ENCODE measurements at regions of chr12 and their contacts with region 1.

Region 1: DNA sequence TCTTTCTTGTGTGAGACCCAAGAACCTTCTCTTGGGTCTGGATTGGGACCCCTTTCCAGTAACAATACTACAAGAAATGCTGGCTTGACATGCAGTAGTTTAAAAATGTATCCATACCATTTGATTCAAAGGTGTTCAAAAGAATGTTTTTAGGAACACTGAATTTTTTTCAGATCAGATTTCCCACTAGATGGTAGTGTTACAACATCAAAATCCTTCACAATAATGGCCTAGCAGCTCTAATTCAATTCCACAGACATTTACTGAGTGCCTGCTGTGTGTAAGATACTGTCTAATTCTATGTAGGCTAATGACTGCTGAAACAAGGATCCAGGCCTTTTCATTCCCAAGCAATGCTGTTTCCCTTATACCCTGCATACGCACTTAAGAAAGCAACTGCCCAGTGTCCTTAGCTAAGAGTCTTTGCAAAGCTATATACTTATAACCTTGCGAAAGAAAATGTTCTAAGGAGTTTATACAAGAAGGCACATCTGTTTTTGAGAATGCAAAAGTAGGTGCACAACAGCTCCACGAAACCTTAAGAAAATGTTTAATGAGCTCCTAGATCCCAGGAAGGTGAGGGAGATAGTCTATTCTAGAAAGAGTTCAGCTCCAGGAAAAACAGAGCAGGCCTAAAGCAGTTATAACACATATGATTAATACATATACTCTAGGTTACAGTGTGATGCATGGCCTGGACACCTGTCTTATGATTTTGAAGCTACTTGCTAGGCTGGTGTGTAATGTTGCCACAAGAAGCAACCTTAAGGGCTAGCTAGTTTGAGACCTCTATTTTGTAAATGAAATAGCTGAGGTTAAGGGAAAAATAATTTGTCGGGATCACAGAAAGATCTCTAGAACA is 50.9 kb upstream of the PKP2 start:
- DNase-seq: peak in 1 of 2 experiments; percentile 63
- H3K4me3 ChIP-seq: no peak overlapping the region
- H3K4me3 Mint-ChIP-seq: no peak overlapping the region
- H3K27ac Mint-ChIP-seq: peak overlapping the region; percentile 12
- H3K4me1 ChIP-seq: peaks cover 16% of the 10 kb centered on the region
- H3K4me1 Mint-ChIP-seq: peaks cover 12% of the 10 kb centered on the region
- H3K27me3 ChIP-seq: no peaks in the 10 kb centered on the region
- H3K27me3 Mint-ChIP-seq: no peaks in the 10 kb centered on the region
- CTCF ChIP-seq: peak in 1 of 2 experiments; percentile 21

Region 2: DNA sequence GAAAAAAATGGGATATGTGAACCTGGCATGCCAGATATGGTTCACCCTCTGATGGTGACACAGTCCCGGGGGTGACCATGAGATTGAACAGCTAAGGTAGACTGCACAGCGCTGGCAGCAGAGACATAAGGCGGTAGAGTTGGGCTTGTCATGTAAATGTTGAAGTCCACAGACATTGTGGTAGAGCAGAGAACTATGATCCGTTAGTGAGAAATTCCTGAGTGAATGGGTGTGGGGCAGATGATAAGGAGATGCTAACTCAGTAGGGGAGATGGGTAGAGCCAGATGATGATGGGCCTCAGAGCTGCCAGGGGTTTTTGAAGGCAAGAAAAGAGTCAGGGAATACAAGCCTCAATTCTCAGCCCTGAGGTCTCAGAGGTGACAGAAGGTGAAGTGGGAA is 319.5 kb before region 1 on chr12:
- CTCF ChIA-PET with region 1: no interaction called
- POLR2A ChIA-PET with region 1: no interaction called
- intact Hi-C with region 1: no loop called
- DNase-seq: no peak
- H3K4me3 ChIP-seq: no peak overlapping the region
- H3K4me3 Mint-ChIP-seq: no peak overlapping the region
- H3K27ac Mint-ChIP-seq: no peak overlapping the region
- H3K4me1 ChIP-seq: no peaks in the 10 kb centered on the region
- H3K4me1 Mint-ChIP-seq: no peaks in the 10 kb centered on the region
- H3K27me3 ChIP-seq: no peaks in the 10 kb centered on the region
- H3K27me3 Mint-ChIP-seq: no peaks in the 10 kb centered on the region
- CTCF ChIP-seq: no peak

Region 3: DNA sequence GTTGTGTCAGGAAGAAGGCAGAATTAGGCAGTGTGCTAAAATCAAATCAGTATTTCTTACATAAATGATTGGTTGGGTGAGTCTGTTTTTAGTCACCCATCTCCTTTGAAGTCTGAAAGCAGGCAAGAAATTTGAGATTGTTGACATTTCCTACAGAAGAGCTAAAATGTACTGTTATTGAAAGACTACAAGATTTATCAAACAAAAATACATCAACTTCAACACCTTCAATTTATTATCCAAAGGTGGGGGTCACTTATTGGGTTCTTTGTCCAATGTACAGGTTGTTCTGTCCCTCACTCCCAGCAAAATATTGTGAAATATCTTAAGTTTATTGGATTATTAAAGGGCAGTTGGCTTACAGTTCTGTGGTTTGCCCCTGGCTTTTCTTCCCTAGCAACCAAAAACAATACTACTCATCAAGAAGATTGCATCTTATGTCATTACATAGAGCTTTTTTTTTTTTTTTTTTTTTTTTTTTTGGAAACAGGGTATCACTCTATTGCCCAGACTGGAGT is 30.3 kb before region 1 on chr12:
- CTCF ChIA-PET with region 1: no interaction called
- POLR2A ChIA-PET with region 1: no interaction called
- intact Hi-C with region 1: no loop called
- DNase-seq: no peak
- H3K4me3 ChIP-seq: no peak overlapping the region
- H3K4me3 Mint-ChIP-seq: no peak overlapping the region
- H3K27ac Mint-ChIP-seq: no peak overlapping the region
- H3K4me1 ChIP-seq: no peaks in the 10 kb centered on the region
- H3K4me1 Mint-ChIP-seq: no peaks in the 10 kb centered on the region
- H3K27me3 ChIP-seq: no peaks in the 10 kb centered on the region
- H3K27me3 Mint-ChIP-seq: no peaks in the 10 kb centered on the region
- CTCF ChIP-seq: no peak

Region 4: DNA sequence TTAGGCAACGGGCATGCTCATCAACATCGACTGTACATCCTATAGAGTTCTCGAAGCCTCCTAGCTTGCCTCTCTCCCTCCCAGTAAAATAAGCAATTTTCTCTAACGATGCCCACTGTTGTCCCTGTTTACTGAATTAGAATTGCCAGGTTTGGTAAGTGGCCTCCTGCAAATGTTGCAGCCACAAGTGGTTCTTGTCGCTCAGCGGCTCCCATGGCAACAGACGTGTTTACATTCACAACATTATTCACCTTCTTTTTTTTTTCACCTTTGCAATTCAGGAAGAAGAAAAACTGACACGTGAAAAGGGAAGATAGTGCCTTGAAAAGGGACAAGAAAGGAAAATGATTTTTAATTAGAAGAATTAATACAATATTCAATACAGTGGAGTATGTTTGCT is 50.0 kb after region 1 on chr12:
- CTCF ChIA-PET with region 1: no interaction called
- POLR2A ChIA-PET with region 1: no interaction called
- intact Hi-C with region 1: no loop called
- DNase-seq: no peak
- H3K4me3 ChIP-seq: no peak overlapping the region
- H3K4me3 Mint-ChIP-seq: no peak overlapping the region
- H3K27ac Mint-ChIP-seq: no peak overlapping the region
- H3K4me1 ChIP-seq: no peaks in the 10 kb centered on the region
- H3K4me1 Mint-ChIP-seq: peaks cover 16% of the 10 kb centered on the region
- H3K27me3 ChIP-seq: no peaks in the 10 kb centered on the region
- H3K27me3 Mint-ChIP-seq: no peaks in the 10 kb centered on the region
- CTCF ChIP-seq: no peak

Region 5: DNA sequence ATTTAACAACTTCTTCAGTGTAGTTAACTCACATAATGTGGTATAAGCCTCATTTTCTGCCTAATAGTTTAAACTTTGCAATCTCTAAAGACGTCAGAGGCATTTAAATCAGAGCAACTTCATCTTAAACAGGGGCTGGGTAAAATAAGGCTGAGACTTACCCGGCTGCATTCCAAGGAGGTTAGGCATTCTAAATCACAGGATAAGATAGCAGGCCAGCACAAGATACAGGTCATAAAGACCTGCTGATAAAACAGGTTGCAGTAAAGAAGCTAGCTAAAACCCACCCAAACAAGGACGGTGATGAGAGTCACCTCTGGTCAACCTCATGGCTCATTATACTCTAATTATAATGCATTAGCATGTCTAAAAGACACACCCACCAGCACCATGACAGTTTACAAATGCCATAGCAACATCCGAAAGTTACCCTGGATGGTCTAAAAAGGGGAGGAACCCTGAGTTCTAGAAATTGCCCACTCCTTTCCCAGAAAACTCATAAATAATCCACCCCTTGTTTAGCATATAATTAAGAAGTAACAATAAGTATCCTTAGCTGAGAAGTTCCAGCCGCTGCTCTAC is 64.9 kb after region 1 on chr12:
- CTCF ChIA-PET with region 1: interaction called, 5 read pairs
- POLR2A ChIA-PET with region 1: no interaction called
- intact Hi-C with region 1: loop called (anchors 2 kb)
- DNase-seq: peak; percentile 73 to 85
- H3K4me3 ChIP-seq: no peak overlapping the region
- H3K4me3 Mint-ChIP-seq: peak overlapping the region; percentile 48
- H3K27ac Mint-ChIP-seq: peak overlapping the region; percentile 53
- H3K4me1 ChIP-seq: peaks cover 27% of the 10 kb centered on the region
- H3K4me1 Mint-ChIP-seq: peaks cover 17% of the 10 kb centered on the region
- H3K27me3 ChIP-seq: no peaks in the 10 kb centered on the region
- H3K27me3 Mint-ChIP-seq: no peaks in the 10 kb centered on the region
- CTCF ChIP-seq: no peak

Region 6: DNA sequence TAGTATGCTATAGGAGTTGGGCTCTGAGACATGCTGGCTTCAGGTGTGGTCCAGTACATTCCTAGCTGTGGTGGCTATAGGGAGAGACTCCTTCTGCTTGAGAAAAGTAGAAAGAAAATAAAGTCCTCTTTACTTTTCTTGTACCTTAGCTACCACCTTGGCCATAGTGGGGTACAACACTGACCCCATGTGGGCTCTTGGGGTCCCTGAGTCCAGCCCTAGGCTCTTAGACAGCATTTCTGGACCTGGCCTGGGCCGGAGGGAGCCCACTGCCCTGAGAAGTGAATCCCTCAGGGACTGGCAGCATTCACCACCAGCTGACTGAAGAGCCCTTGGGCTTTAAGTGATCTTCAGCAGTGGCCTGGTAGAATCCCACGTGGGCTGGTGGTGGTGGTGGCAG is 349.1 kb after region 1 on chr12:
- CTCF ChIA-PET with region 1: no interaction called
- POLR2A ChIA-PET with region 1: no interaction called
- intact Hi-C with region 1: loop called (anchors 10 kb)
- DNase-seq: no peak
- H3K4me3 ChIP-seq: no peak overlapping the region
- H3K4me3 Mint-ChIP-seq: no peak overlapping the region
- H3K27ac Mint-ChIP-seq: no peak overlapping the region
- H3K4me1 ChIP-seq: peaks cover 10% of the 10 kb centered on the region
- H3K4me1 Mint-ChIP-seq: no peaks in the 10 kb centered on the region
- H3K27me3 ChIP-seq: no peaks in the 10 kb centered on the region
- H3K27me3 Mint-ChIP-seq: no peaks in the 10 kb centered on the region
- CTCF ChIP-seq: no peak

Region 7: DNA sequence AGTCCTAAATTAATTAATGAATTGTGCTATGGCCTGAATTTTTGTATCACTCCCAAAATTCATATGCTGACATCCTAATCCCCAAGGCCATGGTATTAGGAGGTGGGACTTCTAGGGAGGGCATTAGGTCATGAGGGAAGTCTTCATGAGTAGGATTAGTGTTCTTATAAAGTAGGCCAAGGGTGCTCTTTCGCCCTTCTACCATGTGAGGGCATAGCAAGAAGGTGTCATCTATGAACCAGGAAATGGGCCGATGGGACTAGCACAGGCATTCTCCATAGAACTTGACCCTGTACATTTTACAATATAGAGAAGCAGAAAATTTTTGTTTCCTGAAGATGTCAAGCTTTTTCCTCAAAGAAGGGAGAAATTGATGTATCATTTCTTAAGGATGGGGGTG is 479.6 kb after region 1 on chr12:
- CTCF ChIA-PET with region 1: no interaction called
- POLR2A ChIA-PET with region 1: no interaction called
- intact Hi-C with region 1: loop called (anchors 5 kb)
- DNase-seq: peak in 1 of 2 experiments; percentile 40
- H3K4me3 ChIP-seq: no peak overlapping the region
- H3K4me3 Mint-ChIP-seq: no peak overlapping the region
- H3K27ac Mint-ChIP-seq: no peak overlapping the region
- H3K4me1 ChIP-seq: no peaks in the 10 kb centered on the region
- H3K4me1 Mint-ChIP-seq: no peaks in the 10 kb centered on the region
- H3K27me3 ChIP-seq: no peaks in the 10 kb centered on the region
- H3K27me3 Mint-ChIP-seq: peaks cover 6% of the 10 kb centered on the region
- CTCF ChIP-seq: peak; percentile 24 to 25

Region 8: DNA sequence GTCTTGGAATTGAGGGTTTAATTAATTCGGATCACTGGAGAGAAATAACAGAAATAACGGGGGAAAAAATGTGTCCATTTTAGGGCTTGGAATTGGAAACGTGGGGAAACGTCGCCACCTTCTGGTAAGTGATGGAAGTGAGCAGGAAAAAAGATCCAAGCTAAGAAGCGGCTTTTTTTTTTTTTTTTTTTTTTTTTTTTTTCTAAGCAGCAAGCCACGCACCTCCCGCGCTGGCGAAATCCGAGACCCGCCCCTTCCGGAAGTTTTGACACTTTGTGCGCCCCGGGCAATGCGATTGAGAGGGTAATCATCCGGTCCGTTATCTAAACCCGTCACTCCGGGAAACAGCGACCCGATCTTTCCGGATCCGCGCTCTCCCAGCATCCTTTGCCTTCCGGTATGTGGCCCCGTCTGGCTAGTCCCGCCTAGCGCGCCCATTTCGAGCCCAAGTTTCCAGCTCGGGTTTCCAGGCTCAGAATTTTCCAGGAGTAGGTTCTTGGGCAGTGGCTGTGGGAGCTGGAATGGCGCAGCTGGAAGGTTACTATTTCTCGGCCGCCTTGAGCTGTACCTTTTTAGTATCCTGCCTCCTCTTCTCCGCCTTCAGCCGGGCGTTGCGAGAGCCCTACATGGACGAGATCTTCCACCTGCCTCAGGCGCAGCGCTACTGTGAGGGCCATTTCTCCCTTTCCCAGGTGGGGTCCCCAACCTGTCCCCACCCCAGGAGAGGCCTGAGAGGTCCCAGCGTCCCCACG is 1074.8 kb after region 1 on chr12 and contains the start of gene ALG10:
- CTCF ChIA-PET with region 1: interaction called, 11 read pairs
- POLR2A ChIA-PET with region 1: no interaction called
- intact Hi-C with region 1: loop called (anchors 1 kb)
- DNase-seq: peak; percentile 98 to 99
- H3K4me3 ChIP-seq: peak within 1 kb of the TSS; percentile 64
- H3K4me3 Mint-ChIP-seq: peak within 1 kb of the TSS; percentile 96
- H3K27ac Mint-ChIP-seq: peak within 1 kb of the TSS; percentile 98
- H3K4me1 ChIP-seq: peaks cover 3% of the 10 kb centered on the region; the same call in 1 of the 2 replicates
- H3K4me1 Mint-ChIP-seq: no peaks in the 10 kb centered on the region
- H3K27me3 ChIP-seq: no peaks in the 10 kb centered on the region
- H3K27me3 Mint-ChIP-seq: no peaks in the 10 kb centered on the region
- CTCF ChIP-seq: peak; percentile 78 to 89
- total RNA-seq, gene ALG10: 14.7 and 18.8 TPM in 2 replicates

Measured in Caco-2 (cell line).